ENCODE measurements at regions of chr11 and their contacts with region 1.

Region 1: GRCh38 chr11:4636962-4637661 is at the start of gene OR51D1:
- DNase-seq: peak; percentile 71
- H3K4me3 ChIP-seq: peak within 1 kb of the TSS in 1 of 2 donors; percentile 12
- H3K27ac ChIP-seq: peak within 1 kb of the TSS; percentile 68 to 72
- H3K4me1 ChIP-seq: no peaks in the 10 kb centered on the region
- H3K27me3 ChIP-seq: no peaks in the 10 kb centered on the region
- CTCF ChIP-seq: peak; percentile 73 to 91 (median 86)
- POLR2A ChIP-seq: no peak
- total RNA-seq, gene OR51D1: not detected

Region 2: DNA sequence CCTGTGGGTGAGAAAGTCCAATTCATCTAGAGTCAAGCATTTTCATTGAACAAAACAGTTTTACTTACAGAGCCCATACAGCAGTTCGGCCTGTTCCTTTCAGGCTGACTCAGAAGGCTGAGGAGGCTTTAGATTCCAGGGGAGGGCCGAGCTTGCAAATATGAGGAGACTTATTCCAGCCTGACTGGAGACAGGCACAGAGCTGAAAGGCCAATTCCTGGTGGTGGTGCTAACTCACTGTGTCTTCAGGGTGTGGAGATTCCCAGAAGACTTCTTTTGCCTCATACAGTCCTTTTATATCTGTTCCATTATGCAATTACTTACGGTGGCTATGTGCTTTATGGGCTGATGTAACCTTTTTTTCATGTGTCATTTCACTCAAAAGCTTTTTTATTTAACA is 60.5 kb after region 1 on chr11 and contains the start of gene OR51E2:
- intact Hi-C with region 1: loop called (anchors 5 kb)
- DNase-seq: peak; percentile 19
- H3K4me3 ChIP-seq: peak within 1 kb of the TSS; percentile 16 to 28
- H3K27ac ChIP-seq: peak within 1 kb of the TSS; percentile 60 to 61
- H3K4me1 ChIP-seq: no peaks in the 10 kb centered on the region
- H3K27me3 ChIP-seq: no peaks in the 10 kb centered on the region
- CTCF ChIP-seq: peak in 2 of 4 experiments; percentile 11 to 26
- POLR2A ChIP-seq: no peak
- total RNA-seq, gene OR51E2: 10.6 to 100 TPM

Region 3: DNA sequence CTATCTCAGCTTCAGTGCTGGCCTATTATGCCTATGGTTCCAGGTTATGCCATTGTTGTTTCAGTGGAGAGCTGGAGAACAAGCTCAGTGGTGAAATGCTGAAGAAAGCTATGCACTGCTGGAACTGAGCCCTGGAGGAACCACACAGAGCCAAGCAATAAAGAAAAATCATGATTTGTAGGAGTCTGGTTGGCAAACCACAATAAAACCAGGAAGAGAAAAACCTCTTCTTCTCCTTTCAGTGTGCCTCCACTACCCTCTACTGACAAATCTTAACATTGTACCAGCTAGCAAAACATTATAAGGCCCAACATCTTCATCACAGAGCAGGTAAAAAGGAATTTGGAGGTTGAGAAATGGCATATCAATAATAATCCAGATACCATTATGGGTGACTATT is 189.3 kb after region 1 on chr11:
- intact Hi-C with region 1: loop called (anchors 2 kb)
- DNase-seq: peak; percentile 70
- H3K4me3 ChIP-seq: no peak overlapping the region
- H3K27ac ChIP-seq: peak overlapping the region; percentile 38 to 56
- H3K4me1 ChIP-seq: no peaks in the 10 kb centered on the region
- H3K27me3 ChIP-seq: no peaks in the 10 kb centered on the region
- CTCF ChIP-seq: peak in 3 of 4 experiments; percentile 61 to 91 (median 74)
- POLR2A ChIP-seq: no peak